Activated B cell treated with CpG ODN at 0.5 μM for 24 hours (primary cell): ENCODE measurements at regions of chr7 and their contacts with region 1.

Region 1: DNA sequence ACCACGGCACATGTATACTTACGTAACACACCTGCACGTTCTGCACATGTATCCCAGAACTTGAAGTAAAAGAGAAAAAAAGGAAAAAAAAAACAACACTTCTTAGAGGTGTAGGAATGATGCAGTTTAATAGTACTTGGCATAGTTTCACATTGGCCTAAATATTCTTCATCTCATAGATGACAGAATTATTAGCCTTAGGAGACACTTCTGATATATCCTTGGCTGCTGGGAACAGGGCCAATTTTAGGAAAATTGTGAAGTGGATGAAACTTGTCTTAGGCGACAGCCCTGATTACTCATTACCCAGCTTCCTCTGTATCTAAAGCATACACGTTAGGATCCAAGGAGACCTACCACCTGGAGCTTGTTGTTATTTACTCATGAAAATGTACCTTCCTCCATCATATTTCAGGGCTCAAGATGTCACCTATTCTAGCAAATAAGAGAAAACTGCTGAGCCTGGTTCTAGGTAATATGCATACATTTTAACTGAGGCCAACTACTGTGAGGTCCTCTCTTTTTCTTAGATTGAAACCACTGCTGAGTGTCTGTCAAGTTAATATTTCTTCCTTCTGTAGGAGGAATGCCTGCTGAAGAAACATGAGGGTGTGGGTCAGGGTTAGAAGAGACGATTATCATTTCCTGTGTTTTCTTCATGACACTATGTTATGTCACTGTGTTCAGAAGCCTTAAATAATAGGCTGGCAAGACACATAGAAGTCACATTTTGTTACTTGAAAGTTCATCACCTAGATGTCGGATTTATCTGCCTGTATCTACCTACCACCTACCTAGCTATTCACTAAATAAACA is 44.3 kb downstream of the CPED1 start:
- DNase-seq: no peak
- ATAC-seq: no peak
- H3K4me3 Mint-ChIP-seq: no peak overlapping the region
- H3K27ac Mint-ChIP-seq: no peak overlapping the region
- H3K4me1 Mint-ChIP-seq: no peaks in the 10 kb centered on the region
- H3K27me3 Mint-ChIP-seq: no peaks in the 10 kb centered on the region
- CTCF ChIP-seq: no peak

Region 2: GRCh38 chr7:121797657-121798452 is 765.0 kb after region 1 on chr7:
- CTCF ChIA-PET with region 1: no interaction called
- POLR2A ChIA-PET with region 1: interaction called, 10 read pairs
- intact Hi-C with region 1: no loop called
- DNase-seq: no peak
- ATAC-seq: no peak
- H3K4me3 Mint-ChIP-seq: no peak overlapping the region
- H3K27ac Mint-ChIP-seq: no peak overlapping the region
- H3K4me1 Mint-ChIP-seq: no peaks in the 10 kb centered on the region
- H3K27me3 Mint-ChIP-seq: no peaks in the 10 kb centered on the region
- CTCF ChIP-seq: no peak